ENCODE measurements at regions of chr1 and their contacts with region 1.

Region 1: GRCh38 chr1:211323156-211324063 is 3.2 kb upstream of the TRAF5 start:
- DNase-seq: peak; percentile 88
- H3K4me3 Mint-ChIP-seq: no peak overlapping the region
- H3K27ac Mint-ChIP-seq: no peak overlapping the region
- H3K4me1 Mint-ChIP-seq: peaks cover 15% of the 10 kb centered on the region
- H3K27me3 Mint-ChIP-seq: no peaks in the 10 kb centered on the region
- CTCF ChIP-seq: peak; percentile 98

Region 2: GRCh38 chr1:210594605-210595004 is 728.8 kb before region 1 on chr1:
- CTCF ChIA-PET with region 1: no interaction called
- POLR2A ChIA-PET with region 1: no interaction called
- intact Hi-C with region 1: no loop called
- DNase-seq: no peak
- H3K4me3 Mint-ChIP-seq: no peak overlapping the region
- H3K27ac Mint-ChIP-seq: no peak overlapping the region
- H3K4me1 Mint-ChIP-seq: peaks cover 17% of the 10 kb centered on the region
- H3K27me3 Mint-ChIP-seq: no peaks in the 10 kb centered on the region
- CTCF ChIP-seq: no peak

Region 3: GRCh38 chr1:211192227-211192626 is 131.2 kb before region 1 on chr1:
- CTCF ChIA-PET with region 1: no interaction called
- POLR2A ChIA-PET with region 1: no interaction called
- intact Hi-C with region 1: no loop called
- DNase-seq: no peak
- H3K4me3 Mint-ChIP-seq: no peak overlapping the region
- H3K27ac Mint-ChIP-seq: no peak overlapping the region
- H3K4me1 Mint-ChIP-seq: peaks cover 6% of the 10 kb centered on the region
- H3K27me3 Mint-ChIP-seq: no peaks in the 10 kb centered on the region
- CTCF ChIP-seq: no peak

Region 4: DNA sequence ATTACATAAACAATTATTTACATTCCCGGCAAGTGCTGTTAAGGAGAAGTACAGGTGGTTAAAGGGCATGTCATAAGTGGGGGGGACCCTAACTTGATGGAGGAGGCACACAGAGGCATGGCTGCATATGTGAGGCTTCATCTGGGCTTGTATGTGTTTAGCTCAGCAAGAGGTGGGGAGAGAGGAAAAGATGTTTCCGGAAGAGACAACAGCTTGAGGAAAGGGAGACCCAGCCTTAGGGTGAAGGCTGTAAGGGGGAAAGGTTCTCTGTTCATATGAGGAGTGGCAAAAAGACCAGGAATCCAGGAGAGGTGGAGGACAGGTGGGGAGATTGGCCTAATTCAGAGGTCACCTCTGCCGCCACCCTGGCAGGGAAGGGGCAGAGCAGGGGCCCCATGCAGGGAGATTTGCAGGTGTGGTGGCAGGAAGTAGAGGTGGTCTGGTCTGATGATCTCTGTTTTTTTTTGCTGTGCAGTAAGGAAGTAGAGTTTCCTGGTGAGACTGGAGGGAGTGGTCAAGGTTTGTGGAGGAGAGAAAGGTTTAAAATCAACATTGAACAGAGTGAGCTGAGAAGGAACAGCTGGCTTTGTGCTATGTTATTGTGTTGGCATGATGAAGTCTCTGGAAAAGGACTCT is 12.2 kb after region 1 on chr1:
- CTCF ChIA-PET with region 1: interaction called, 153 read pairs
- POLR2A ChIA-PET with region 1: interaction called, 6 read pairs
- intact Hi-C with region 1: no loop called
- DNase-seq: no peak
- H3K4me3 Mint-ChIP-seq: no peak overlapping the region
- H3K27ac Mint-ChIP-seq: no peak overlapping the region
- H3K4me1 Mint-ChIP-seq: peaks cover 22% of the 10 kb centered on the region
- H3K27me3 Mint-ChIP-seq: no peaks in the 10 kb centered on the region
- CTCF ChIP-seq: no peak

Region 5: DNA sequence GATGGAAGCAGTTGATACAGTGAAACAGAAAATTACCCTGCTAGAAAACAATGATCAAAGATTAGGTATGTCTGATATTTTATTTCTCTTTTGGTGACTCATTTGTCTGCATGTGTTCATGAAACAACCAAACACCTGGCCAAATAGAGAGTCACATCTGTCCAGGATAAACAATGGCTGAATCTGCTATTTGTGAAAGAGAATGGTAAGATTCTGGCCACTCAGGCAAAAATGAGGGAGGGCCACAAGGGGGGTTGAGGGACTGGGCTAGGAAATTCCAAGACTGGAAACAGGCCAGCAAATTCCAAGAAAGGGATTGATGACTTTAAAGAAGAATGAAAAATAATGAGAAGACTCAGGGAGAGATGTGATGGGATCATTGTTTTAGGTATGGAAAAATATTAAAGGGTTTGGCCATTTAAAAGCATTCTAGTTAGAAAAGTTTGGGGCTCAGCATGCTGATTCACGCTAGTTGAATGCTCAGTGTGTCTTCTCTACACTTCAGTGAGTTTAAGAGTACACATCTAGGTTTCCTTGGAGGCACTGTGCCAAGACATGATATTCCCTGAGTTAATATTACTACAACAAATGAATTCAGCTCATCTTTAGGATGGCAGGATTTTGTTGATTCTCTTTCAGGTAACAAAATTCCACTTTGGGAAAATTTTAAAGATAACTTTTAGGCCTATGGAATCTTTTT is 48.1 kb after region 1 on chr1:
- CTCF ChIA-PET with region 1: interaction called, 13 read pairs
- POLR2A ChIA-PET with region 1: interaction called, 4 read pairs
- intact Hi-C with region 1: no loop called
- DNase-seq: peak; percentile 53
- H3K4me3 Mint-ChIP-seq: peak overlapping the region; percentile 1
- H3K27ac Mint-ChIP-seq: peak overlapping the region; percentile 75
- H3K4me1 Mint-ChIP-seq: peaks cover 25% of the 10 kb centered on the region
- H3K27me3 Mint-ChIP-seq: no peaks in the 10 kb centered on the region
- CTCF ChIP-seq: no peak

Region 6: DNA sequence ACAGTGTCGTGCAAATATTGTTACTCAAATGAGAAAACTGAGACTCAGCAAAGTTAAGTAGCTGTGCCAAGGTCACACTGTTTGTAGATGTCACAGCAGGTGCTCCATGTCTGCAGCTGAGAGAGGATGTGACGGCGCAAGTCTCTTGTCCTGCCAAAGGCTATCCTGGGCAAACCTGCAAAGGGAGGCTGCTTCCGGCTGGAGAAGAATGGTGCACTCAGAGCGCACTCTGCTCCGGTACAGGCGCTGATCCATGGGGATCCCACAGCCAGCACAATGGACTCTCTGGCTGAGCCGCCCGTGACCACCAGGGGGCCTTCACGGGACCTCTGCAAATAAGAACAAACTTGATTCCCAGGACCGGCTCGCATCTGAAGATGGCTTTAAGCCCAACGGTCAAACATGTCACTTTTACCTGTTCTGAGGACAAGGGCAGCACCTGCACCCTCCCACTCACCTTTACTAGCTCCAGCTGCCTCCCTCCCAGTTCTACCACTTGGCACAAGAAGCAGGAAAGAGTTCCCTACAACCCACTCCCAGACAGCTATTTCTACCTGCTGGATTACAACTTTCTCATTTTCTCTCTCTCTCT is 146.6 kb after region 1 on chr1:
- CTCF ChIA-PET with region 1: interaction called, 167 read pairs
- POLR2A ChIA-PET with region 1: interaction called, 3 read pairs
- intact Hi-C with region 1: no loop called
- DNase-seq: peak; percentile 92
- H3K4me3 Mint-ChIP-seq: no peak overlapping the region
- H3K27ac Mint-ChIP-seq: no peak overlapping the region
- H3K4me1 Mint-ChIP-seq: peaks cover 15% of the 10 kb centered on the region
- H3K27me3 Mint-ChIP-seq: no peaks in the 10 kb centered on the region
- CTCF ChIP-seq: peak; percentile 98

Region 7: DNA sequence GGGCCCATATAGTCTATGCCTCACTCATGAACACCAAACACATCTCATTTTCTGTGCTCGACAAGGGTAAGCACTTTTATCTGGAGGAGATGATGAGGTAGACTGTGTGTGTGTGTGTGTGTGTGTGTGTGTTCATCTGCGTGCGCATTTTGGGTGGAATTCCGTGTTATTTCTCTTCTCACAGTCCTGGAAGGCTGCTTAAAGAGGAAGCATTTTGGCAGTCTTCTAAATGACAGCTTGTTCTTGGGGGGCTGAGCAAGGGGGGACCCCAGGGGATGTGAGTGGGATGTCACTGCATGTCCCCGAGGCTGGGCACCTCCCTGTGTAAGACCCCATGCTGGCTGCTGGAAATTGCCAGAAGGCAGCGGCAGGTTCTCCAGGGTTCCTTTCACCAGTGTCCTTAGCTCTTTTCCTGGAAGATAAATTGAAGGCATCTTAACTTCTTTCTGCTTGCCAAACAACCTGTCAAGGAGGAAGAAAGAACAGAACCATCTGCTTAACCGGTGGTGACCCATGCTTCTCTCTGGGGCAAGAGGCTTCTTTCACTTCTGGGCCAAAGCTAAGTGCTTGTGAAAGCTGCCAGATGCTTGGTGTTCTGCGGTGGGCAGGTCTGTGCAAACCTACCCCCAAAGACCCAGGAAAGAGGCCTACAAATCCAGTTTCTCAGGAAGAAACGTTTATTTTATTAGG is 178.4 kb after region 1 on chr1:
- CTCF ChIA-PET with region 1: interaction called, 23 read pairs
- POLR2A ChIA-PET with region 1: no interaction called
- intact Hi-C with region 1: no loop called
- DNase-seq: no peak
- H3K4me3 Mint-ChIP-seq: no peak overlapping the region
- H3K27ac Mint-ChIP-seq: no peak overlapping the region
- H3K4me1 Mint-ChIP-seq: no peaks in the 10 kb centered on the region
- H3K27me3 Mint-ChIP-seq: no peaks in the 10 kb centered on the region
- CTCF ChIP-seq: no peak

Region 8: DNA sequence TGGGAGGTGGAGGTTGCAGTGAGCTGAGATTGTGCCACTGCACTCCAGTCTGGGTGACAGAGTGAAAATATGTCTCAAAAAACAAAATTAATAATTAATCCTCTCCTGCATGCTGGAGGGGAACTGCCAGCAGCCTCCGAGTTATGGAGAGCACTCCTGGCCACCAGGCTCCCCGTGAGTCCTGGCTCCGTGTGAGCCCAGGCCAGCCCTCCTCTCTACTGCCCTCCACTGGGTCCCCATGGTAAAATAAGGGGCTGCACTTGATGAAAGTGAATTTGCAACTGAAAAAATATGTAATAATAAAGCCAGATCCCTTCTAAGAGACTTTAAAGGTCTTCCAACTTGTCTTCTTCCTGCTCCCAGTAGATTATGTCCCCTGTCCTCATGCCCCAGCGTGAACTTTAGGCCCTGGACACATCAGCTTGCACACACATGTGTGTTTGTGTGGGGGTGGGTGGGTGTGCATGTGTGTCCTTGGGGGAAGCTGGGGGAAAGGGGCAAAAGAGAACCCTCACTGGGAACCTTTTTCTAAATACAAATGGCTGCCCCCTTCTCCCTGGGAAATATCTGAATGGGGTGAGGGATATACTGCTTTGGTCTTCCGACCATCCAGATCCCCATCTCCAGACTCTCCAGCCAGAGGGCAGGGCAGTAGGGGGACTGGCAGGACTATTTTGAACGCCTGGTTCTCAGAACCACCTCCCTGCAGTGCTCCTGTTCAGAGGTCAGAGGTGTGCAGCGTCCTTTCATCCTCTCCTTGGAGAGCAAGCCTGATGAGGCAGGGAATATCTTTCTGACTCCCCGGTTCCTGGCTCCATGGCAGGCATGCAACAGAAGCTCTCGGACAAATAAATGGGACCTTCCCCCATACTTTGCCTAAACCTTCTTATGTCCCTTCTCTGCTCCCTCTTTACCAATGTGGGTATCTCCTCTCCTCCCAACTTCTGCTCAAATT is 325.8 kb after region 1 on chr1:
- CTCF ChIA-PET with region 1: interaction called, 61 read pairs
- POLR2A ChIA-PET with region 1: interaction called, 7 read pairs
- intact Hi-C with region 1: no loop called
- DNase-seq: no peak
- H3K4me3 Mint-ChIP-seq: no peak overlapping the region
- H3K27ac Mint-ChIP-seq: peak overlapping the region; percentile 1
- H3K4me1 Mint-ChIP-seq: peaks cover 37% of the 10 kb centered on the region
- H3K27me3 Mint-ChIP-seq: no peaks in the 10 kb centered on the region
- CTCF ChIP-seq: peak; percentile 22

Measured in MCF 10A (cell line).